ENCODE measurements at regions of chr2 and their contacts with region 1.

Region 1: GRCh38 chr2:206273905-206274304 is 558 bp upstream of the ZDBF2 start:
- DNase-seq: no peak

Region 2: GRCh38 chr2:206143451-206143850 is 130.5 kb before region 1 on chr2:
- intact Hi-C with region 1: no loop called
- DNase-seq: no peak

Region 3: DNA sequence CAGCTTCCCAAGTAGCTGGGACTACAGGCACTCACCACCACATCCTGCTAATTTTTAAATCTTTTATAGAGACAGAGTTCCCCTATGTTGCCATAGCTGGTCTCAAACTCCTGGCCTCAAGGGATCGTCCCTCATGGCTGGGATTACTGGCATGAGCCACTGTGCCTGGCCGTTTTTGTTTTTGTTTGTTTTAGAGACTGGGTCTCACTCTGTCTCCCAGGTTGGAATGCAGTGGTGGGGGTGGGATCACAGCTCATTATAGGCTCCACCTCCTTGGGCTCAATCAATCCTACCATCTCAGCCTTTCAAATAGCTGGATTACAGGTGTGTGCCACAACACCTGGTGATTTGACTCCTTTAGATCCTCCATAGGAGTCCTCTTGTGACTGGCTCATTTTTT is 18.9 kb before region 1 on chr2:
- intact Hi-C with region 1: loop called in 1 of 2 experiments (anchors 2 kb)
- DNase-seq: no peak